HEK293 (cell line): ENCODE measurements at regions of chr6 and their contacts with region 1.

Region 1: DNA sequence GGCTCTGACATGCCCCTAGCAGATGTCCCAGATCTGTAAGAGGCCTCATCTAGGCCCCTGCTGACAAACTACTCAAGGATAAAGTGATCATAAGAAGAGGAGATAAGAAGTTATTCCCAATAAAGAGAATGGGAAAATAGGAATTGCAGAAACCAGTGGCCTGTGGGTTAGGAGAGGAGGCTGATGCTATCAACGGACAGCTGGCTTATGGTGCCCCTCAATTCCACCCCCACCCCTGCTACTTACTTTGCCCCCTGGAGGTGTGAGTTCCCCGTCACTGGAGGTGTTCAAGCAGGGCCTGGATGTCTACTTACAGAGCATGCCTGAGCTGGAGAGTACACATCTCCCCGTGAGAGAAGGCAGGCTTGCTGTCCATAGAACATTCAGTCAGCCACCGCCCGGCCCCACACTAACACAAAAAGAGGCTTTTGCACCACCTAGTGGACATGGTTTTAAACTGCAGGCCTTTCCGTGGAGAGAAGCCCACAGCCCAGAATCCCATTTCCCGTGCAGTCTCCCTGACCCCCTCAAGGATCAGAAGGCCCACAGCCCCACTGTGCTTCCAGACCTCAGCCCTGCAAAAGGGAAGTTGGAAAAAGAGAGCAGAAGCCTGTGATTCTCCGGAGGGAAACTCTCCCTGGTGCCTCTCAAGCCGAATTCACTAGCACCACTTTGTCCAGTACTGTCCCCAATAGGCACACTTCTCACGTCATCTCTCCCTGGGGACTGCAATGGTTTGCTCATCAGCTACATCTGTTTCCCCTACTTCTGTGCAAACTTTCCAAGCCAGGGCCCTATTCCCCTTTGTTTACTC is 23.8 kb upstream of the BNIP5 start:
- H3K4me3 ChIP-seq: no peak overlapping the region
- H3K27ac ChIP-seq: no peak overlapping the region
- H3K4me1 ChIP-seq: no peaks in the 10 kb centered on the region
- CTCF ChIP-seq: peak; percentile 79

Region 2: DNA sequence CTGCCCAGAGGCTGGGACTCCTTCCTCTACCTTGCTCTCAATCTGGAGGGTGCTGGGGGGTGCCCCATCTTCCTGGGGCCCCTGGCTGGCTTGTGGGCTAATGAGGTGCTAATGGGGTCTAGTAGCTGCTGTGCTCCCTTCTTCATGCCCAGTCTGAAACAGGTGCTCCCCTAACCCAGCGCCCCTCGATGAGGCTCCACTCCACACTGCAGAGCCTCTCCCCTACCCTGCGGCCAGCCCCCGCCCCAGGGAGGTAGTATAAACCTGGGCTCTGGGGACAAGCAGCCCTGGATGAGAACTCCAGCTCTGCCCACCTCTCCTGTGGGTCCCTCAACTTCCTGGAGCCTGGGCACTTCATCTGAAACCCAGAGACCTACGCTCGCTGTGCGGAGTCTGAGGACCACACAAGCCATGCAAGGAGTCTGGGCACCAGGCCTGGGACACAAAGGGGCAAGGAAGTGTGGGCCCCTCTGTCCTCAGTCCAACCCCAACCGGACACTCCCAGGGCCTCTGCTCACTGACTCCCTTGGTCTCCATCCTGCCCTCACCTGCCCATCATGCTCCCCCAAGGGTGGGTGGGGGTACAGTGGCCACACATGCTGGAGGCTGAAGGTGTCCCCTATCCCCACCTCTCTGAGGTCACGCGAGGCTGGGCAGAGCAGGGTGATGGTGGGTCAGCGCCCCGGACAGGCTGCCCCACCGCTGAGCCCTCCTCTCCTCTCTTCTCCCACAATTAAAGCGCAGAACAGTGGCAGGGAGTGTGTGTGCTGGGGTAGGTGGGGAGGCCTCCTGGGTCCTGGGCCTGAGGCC is 886.1 kb before region 1 on chr6:
- CTCF ChIA-PET with region 1: no interaction called
- POLR2A ChIA-PET with region 1: no interaction called
- H3K4me3 ChIP-seq: no peak overlapping the region
- H3K27ac ChIP-seq: peak overlapping the region; percentile 3; the same call in 1 of the 2 replicates
- H3K4me1 ChIP-seq: no peaks in the 10 kb centered on the region
- CTCF ChIP-seq: no peak

Region 3: DNA sequence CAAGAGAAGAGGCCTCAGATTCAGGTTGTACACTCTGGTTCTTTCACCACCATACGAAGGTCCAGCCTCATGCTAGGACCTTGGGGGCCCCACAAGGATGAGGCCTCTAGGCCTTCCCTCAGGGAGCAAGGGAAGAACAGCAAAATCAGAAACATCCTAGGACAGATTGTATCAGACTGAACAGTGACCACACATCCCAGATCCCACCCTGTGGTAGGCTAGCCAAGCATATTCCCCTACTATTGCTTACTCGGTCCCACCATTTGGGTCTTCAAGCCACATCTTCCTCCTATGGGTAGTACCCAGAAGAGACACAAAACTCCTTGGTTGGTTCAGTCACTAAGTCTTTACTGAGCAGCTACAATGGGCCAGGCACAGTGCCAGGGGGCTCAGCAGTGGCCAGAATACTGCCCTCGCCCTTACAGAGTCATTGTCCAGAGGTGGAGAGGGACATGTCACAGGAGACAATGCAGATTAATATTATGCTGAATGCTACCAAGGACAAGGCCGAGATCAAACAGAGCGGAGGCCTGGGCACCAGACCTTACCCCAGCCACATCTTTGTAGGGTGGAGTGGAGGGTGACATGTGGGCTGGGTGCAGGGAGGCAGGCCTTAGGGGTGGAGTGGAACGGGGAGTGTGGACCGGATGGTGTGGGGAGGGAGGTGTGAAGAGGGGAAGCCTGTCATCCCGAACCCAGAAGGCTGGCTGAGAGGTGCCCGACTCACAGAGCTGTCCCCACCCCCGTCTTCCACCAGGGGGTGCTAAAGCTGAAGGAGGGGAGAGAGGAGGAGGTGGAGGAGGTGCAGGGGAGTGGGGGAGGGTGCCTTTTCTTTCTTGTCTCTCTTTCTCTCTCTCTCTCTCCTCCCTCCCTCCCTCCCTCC is 236.9 kb before region 1 on chr6:
- CTCF ChIA-PET with region 1: interaction called, 53 read pairs
- POLR2A ChIA-PET with region 1: no interaction called
- H3K4me3 ChIP-seq: no peak overlapping the region
- H3K27ac ChIP-seq: no peak overlapping the region
- H3K4me1 ChIP-seq: no peaks in the 10 kb centered on the region
- CTCF ChIP-seq: peak; percentile 73

Region 4: DNA sequence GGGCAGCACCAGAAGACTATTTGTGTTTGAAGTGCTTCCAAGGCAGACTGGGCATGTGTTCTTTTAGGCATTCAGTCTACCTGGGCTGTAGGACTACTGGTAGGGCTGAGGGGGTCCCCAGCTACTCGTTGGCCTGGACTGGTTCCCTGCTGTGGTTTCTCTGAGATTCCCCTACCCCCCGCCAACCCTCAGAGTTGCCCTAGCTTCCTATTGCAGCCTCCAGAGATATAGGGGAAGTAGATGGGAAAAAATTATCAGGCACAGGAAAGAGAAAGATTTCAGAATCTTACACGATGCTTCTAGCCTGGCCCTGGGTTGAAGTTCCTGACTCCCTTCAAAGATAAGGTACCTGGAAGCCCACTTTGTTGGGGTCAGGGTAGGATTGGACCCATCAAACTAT is 141.4 kb before region 1 on chr6:
- CTCF ChIA-PET with region 1: no interaction called
- POLR2A ChIA-PET with region 1: no interaction called
- H3K4me3 ChIP-seq: no peak overlapping the region
- H3K27ac ChIP-seq: no peak overlapping the region
- H3K4me1 ChIP-seq: no peaks in the 10 kb centered on the region
- CTCF ChIP-seq: no peak

Region 5: GRCh38 chr6:36333931-36334725 is 26.3 kb before region 1 on chr6:
- CTCF ChIA-PET with region 1: interaction called, 234 read pairs
- POLR2A ChIA-PET with region 1: no interaction called
- H3K4me3 ChIP-seq: no peak overlapping the region
- H3K27ac ChIP-seq: no peak overlapping the region
- H3K4me1 ChIP-seq: peaks cover 3% of the 10 kb centered on the region
- CTCF ChIP-seq: no peak

Region 6: GRCh38 chr6:36373368-36374019 is 13.0 kb after region 1 on chr6:
- CTCF ChIA-PET with region 1: interaction called, 12 read pairs
- POLR2A ChIA-PET with region 1: no interaction called
- H3K4me3 ChIP-seq: no peak overlapping the region
- H3K27ac ChIP-seq: no peak overlapping the region
- H3K4me1 ChIP-seq: no peaks in the 10 kb centered on the region
- CTCF ChIP-seq: no peak

Region 7: DNA sequence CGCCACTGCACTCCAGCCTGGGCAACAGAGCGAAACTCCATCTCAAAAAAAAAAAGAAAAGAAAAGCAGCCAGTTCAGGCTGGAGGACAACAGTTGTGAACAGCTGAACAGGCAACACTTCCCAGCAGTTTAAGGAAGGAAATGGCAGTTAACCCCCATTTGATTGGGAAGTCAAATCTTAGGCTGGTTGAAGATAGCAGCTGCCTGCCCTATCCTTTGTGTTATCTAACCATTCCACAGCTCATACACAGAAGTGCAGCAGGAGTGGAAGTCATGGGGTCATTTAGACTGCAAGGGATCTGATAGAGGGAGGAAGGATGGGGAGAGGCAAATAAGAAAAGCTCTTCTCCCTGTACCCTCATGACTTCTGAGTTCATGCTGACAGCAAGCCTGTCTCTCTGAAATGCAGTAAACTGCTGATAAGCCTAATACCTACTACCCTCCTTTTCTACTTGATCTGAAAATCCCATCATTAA is 117.6 kb after region 1 on chr6:
- CTCF ChIA-PET with region 1: no interaction called
- POLR2A ChIA-PET with region 1: no interaction called
- H3K4me3 ChIP-seq: no peak overlapping the region
- H3K27ac ChIP-seq: no peak overlapping the region
- H3K4me1 ChIP-seq: no peaks in the 10 kb centered on the region
- CTCF ChIP-seq: no peak